Right lobe of liver (tissue), 6 donors: ENCODE measurements at regions of chr11 and their contacts with region 1.

Region 1: GRCh38 chr11:70755410-70756161 is 357.3 kb downstream of the CTTN start:
- DNase-seq: peak; percentile 64 to 81 (median 79)
- ATAC-seq: peak; percentile 95 to 99 (median 97)
- H3K4me3 ChIP-seq: no peak overlapping the region
- H3K27ac ChIP-seq: no peak overlapping the region
- H3K4me1 ChIP-seq: no peaks in the 10 kb centered on the region
- H3K27me3 ChIP-seq: no peaks in the 10 kb centered on the region
- CTCF ChIP-seq: peak; percentile 89 to 96 (median 92)
- POLR2A ChIP-seq: no peak

Region 2: GRCh38 chr11:70456921-70457532 is 298.6 kb before region 1 on chr11:
- intact Hi-C with region 1: loop called (anchors 5 to 10 kb)
- DNase-seq: no peak
- ATAC-seq: no peak
- H3K4me3 ChIP-seq: no peak overlapping the region
- H3K27ac ChIP-seq: no peak overlapping the region
- H3K4me1 ChIP-seq: no peaks in the 10 kb centered on the region
- H3K27me3 ChIP-seq: no peaks in the 10 kb centered on the region
- CTCF ChIP-seq: no peak
- POLR2A ChIP-seq: no peak

Region 3: DNA sequence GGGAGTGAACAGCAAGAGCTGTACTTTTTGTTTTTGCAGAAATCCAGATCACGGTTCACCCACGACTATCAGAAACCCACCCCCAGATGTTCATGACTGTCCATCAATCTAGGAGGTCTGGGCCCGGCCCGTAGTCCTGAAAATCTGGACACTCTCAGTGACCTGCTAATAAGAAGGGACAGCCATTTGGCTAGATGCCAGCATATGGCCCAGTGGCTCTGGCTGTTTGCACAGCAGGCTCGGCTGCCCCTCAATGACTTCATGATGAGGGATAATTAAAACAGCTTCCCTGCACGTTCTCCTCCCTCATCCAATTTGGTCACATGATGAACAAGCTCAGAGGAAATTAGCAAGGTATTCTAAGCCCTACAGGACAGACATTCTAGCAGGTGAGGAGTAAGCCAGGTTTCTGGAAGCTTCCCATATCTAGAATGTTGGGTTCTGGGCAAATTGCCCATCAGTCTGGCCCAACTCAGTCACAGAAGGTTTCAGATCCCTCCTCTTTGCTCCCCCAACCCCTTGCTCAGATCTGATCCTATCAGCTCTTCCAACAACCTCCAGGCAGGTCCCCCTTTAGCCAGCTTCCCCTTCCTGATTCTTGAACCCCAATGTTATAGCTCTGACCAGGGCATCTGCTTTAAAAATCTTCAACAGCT is 99.4 kb after region 1 on chr11:
- intact Hi-C with region 1: no loop called
- DNase-seq: no peak
- ATAC-seq: peak in 2 of 4 donors; percentile 22 to 38
- H3K4me3 ChIP-seq: no peak overlapping the region
- H3K27ac ChIP-seq: no peak overlapping the region
- H3K4me1 ChIP-seq: no peaks in the 10 kb centered on the region
- H3K27me3 ChIP-seq: no peaks in the 10 kb centered on the region
- CTCF ChIP-seq: no peak
- POLR2A ChIP-seq: no peak

Region 4: DNA sequence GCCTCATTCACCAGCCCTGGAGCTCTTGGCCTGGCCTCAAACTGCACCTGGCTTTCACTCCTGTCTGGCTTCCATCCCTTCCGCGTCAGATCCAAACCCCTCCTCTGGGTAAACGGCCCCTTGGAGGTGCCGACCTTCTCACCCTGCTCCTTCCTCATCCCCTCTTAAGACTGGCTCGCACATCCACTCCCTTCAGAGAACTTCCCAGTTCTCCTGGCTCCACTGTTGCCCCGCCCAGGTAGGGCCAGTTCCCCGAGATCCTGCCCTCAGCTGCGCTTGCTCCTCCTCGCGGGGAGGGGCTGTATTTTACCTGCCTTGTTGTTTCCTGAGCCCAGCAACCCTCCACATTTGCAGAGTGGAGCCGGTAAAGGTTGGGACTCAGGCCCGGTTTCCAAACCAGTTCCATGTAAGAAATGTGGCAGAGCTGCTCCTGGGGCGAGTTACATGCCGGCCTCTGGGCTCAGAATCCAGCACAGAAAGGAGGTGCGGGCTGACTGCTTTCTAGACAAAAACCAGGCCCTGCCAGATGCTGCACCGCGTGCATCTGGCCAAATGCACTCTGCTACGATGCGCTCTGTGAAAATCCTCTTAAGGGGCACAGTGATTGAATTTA is 510.7 kb after region 1 on chr11:
- intact Hi-C with region 1: no loop called
- DNase-seq: peak in 1 of 3 donors; percentile 29
- ATAC-seq: no peak
- H3K4me3 ChIP-seq: no peak overlapping the region
- H3K27ac ChIP-seq: no peak overlapping the region
- H3K4me1 ChIP-seq: peaks cover 0 to 8% (median 2%) of the 10 kb centered on the region in 4 donors
- H3K27me3 ChIP-seq: no peaks in the 10 kb centered on the region
- CTCF ChIP-seq: no peak
- POLR2A ChIP-seq: no peak

Region 5: GRCh38 chr11:71281831-71282230 is 526.2 kb after region 1 on chr11:
- intact Hi-C with region 1: no loop called
- DNase-seq: peak in 1 of 3 donors; percentile 5
- ATAC-seq: no peak
- H3K4me3 ChIP-seq: no peak overlapping the region
- H3K27ac ChIP-seq: no peak overlapping the region
- H3K4me1 ChIP-seq: peaks cover 0 to 8% (median 2%) of the 10 kb centered on the region in 4 donors
- H3K27me3 ChIP-seq: no peaks in the 10 kb centered on the region
- CTCF ChIP-seq: no peak
- POLR2A ChIP-seq: no peak